ENCODE measurements at regions of chr3 and their contacts with region 1.

Region 1: DNA sequence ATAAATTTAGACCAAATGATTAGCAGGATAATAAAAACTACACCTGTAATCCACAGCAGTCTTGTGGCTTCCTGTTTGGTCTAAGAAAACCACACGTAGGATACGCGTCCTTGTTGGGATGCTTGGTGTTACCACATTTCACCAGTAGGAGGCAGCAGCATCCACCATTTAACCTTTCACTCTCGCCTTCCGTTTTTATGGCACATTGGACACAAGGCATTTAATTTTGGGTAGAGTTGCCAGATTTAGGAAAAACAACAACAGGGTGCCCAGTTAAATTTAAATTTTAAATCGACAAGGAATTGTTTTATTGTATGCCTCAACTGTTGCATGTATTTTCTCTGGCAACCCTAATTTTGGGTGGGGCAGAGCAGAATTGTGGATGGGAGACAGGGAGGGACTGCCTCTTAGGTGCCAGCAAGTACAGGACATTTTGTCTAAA is 6.3 kb downstream of the LRRC31 start:
- DNase-seq: peak; percentile 55 to 77
- ATAC-seq: peak; percentile 88 to 91
- H3K4me3 ChIP-seq: no peak overlapping the region
- H3K27ac ChIP-seq: no peak overlapping the region
- H3K4me1 ChIP-seq: no peaks in the 10 kb centered on the region
- CTCF ChIP-seq: peak; percentile 91
- EP300 ChIP-seq: no peak
- POLR2A ChIP-seq: no peak
- RAD21 ChIP-seq: peak; percentile 84 to 87

Region 2: DNA sequence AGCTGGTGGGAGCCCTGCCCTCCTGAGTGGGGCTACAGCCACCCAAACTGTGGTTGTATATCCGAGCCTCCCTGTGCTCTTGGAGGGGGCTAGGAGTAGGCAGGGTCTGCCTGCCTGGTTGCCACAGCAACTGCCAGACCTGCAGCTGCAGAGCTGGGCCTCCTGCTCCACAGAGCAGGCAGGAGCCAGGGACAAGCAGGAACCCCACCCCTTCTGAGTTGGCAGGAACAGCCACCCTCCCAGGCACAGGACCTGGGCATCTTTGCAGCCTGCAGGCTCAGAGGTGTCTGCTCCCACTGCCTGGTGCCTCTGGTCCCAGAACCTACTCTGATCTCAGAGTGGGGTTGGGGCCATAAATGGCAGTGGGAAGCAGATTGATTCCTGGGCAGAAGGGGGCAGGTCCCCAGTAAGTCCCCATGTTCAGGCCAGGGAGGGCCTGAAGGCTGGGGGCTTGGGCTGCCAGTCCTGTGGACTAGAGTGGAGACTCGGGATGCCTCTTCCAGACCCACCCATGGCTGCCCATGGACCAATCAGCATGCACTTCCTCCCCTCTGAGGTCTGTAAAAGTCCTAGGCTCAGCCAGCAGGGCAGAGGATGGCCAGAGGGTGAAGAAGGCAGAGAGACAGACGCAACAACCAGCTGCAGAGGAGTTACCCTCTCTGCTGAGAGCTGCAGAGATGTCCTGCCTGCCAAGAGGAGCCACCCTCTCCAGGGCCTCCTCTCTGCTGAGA is 16.5 kb after region 1 on chr3:
- CTCF ChIA-PET with region 1: interaction called, 14 read pairs
- POLR2A ChIA-PET with region 1: no interaction called
- DNase-seq: no peak
- ATAC-seq: no peak; a peak in 1 of 6 replicates
- H3K4me3 ChIP-seq: no peak overlapping the region
- H3K27ac ChIP-seq: no peak overlapping the region
- H3K4me1 ChIP-seq: no peaks in the 10 kb centered on the region
- CTCF ChIP-seq: no peak
- EP300 ChIP-seq: no peak
- POLR2A ChIP-seq: no peak
- RAD21 ChIP-seq: no peak

Measured in A549 (cell line).